ENCODE measurements at regions of chr16 and their contacts with region 1.

Region 1: DNA sequence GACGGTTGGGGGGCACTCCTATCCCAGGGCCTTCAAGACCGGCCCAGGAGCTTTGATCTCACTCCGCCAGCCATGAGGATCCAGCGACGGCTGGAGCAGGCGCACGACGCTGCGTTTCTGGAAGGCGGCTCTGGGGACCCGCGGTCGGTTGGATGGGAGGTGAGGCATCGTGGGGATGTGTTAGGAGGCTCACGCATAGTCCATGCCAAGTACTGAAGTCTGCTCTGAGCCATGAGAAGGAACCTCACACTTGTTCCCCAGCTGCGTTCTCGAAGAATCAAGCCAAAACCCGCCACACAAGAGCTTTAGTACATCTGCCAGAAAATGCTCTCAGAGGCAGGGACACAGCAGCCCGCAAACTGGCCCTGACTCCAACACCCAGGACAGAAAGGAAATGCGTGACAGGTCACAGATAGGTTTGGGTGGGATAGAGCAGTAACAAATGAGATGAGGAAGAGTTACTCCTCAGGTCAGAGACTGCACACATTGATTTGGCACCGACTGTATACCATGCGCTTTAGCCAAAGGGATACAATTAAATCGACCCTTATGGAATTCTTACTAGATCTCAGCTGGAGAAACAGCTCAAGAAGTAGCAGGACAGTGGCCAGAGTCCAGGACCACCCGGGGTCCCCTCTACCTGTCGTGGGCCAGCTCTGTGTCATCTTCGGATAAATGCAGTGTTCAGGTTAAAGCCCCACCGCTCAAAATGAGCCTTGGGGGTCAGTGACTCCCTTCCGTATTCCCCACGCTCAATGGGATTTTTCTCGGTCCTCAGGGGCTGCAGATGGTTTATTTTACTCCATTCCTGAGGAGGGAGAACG is 6.7 kb upstream of the GSG1L start:
- DNase-seq: no peak
- H3K4me3 Mint-ChIP-seq: no peak overlapping the region
- H3K27ac Mint-ChIP-seq: no peak overlapping the region
- H3K4me1 Mint-ChIP-seq: no peaks in the 10 kb centered on the region
- H3K27me3 Mint-ChIP-seq: peaks cover 12% of the 10 kb centered on the region

Region 2: GRCh38 chr16:27972500-27972899 is 97.7 kb before region 1 on chr16:
- intact Hi-C with region 1: loop called (anchors 2 kb)
- DNase-seq: peak; percentile 32
- H3K4me3 Mint-ChIP-seq: no peak overlapping the region
- H3K27ac Mint-ChIP-seq: no peak overlapping the region
- H3K4me1 Mint-ChIP-seq: no peaks in the 10 kb centered on the region
- H3K27me3 Mint-ChIP-seq: peaks cover 7% of the 10 kb centered on the region

Region 3: DNA sequence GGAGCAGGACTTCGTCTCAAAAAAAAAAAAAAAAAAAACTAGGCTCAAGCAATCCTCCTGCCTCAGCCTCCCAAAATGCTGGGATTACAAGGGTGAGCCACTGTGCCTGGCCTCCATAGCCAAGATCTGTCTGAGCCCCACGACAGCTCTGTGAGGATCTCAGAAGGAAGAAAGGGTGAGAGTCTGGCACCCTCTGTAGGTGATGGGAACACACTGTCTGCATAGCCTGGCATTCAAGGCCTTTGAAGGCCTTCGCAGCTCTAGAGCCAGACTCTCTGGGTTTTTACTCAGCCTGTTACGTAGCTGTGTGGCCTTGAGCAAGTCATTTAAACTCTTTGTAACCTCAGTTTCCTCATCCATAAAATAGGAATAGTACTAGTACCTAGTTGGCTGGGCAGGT is 147.9 kb after region 1 on chr16:
- intact Hi-C with region 1: loop called (anchors 1 kb)
- DNase-seq: peak; percentile 53
- H3K4me3 Mint-ChIP-seq: no peak overlapping the region
- H3K27ac Mint-ChIP-seq: no peak overlapping the region
- H3K4me1 Mint-ChIP-seq: no peaks in the 10 kb centered on the region
- H3K27me3 Mint-ChIP-seq: no peaks in the 10 kb centered on the region

Region 4: DNA sequence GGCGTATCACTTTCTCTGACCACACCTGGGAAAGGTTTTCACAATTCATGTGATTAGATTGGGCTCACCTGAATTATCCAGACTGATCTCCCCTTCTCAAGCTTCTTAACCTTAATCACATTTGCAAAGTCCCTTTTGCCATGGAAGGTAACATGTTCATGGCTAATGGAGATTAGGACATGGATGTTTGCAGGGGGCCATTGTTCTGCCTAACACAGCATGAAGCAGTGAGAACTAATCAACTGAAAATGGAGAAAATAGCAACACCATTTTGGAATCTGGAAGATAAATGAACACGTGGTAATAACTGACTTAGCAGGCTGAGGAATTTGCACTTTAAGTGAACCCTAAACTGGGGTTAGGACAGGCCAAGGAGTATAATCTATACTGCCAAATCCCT is 197.2 kb after region 1 on chr16:
- intact Hi-C with region 1: no loop called
- DNase-seq: no peak
- H3K4me3 Mint-ChIP-seq: no peak overlapping the region
- H3K27ac Mint-ChIP-seq: no peak overlapping the region
- H3K4me1 Mint-ChIP-seq: no peaks in the 10 kb centered on the region
- H3K27me3 Mint-ChIP-seq: peaks cover 16% of the 10 kb centered on the region

Region 5: DNA sequence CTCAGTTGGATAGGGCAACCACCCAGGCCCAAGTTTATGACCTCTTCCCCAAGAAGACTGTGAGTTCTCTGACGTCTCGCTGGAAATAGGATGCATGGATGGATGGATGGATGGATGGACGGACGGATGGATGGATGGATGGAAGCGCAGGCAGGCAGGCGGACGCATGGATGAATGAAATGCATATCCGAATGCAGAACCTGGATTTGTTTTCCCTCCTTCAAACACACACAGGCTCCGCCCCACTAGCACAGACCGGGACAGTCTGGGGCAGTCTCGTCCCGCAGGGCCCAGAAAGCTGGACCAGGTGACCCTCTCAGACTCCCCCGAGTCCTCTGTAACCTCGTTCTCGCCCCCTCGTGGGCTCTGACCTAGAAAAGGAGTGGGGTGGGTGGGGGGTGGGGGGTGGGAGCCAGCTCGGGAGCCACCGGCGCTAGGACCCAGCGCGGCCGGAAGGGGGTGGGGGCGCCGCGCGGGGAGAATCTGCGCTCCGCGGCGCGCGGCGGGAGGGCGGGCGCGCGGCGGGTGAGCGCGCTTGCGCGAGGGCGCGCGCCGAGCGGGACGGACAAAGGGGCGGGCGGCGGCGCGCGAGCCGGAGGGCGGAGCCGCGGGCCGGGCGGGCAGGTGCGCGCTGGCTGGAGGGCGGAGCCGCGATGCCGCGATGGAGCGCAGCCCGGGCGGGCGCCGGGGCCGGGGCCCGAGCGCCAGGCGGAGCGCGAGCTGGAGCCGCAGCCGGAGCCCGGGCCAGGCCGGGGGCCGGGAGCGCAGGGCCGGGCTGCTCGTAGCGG is 221.9 kb after region 1 on chr16 and contains the start of gene SBK1:
- intact Hi-C with region 1: no loop called
- DNase-seq: peak; percentile 81
- H3K4me3 Mint-ChIP-seq: peak within 1 kb of the TSS; percentile 76
- H3K27ac Mint-ChIP-seq: peak within 1 kb of the TSS; percentile 62
- H3K4me1 Mint-ChIP-seq: peaks cover 31% of the 10 kb centered on the region
- H3K27me3 Mint-ChIP-seq: peaks cover 22% of the 10 kb centered on the region
- total RNA-seq, gene SBK1: 1.3 and 1.4 TPM in 2 replicates